Sciatic nerve (tissue), 2 donors: ENCODE measurements at regions of chr6 and their contacts with region 1.

Region 1: GRCh38 chr6:138824482-138825144 is 28.7 kb downstream of the ECT2L start:
- DNase-seq: no peak
- ATAC-seq: no peak

Region 2: GRCh38 chr6:137224799-137225198 is 1599.8 kb before region 1 on chr6:
- intact Hi-C with region 1: loop called (anchors 5 kb)
- DNase-seq: no peak
- ATAC-seq: peak; percentile 61

Region 3: GRCh38 chr6:138996524-138996923 is 171.9 kb after region 1 on chr6:
- intact Hi-C with region 1: no loop called
- DNase-seq: no peak
- ATAC-seq: peak; percentile 36